Right lobe of liver (tissue), 6 donors: ENCODE measurements at regions of chr12 and their contacts with region 1.

Region 1: GRCh38 chr12:59808317-59808910 is 212.6 kb downstream of the SLC16A7 start:
- DNase-seq: no peak
- ATAC-seq: peak; percentile 76 to 84 (median 82)
- H3K4me3 ChIP-seq: no peak overlapping the region
- H3K27ac ChIP-seq: no peak overlapping the region
- H3K4me1 ChIP-seq: no peaks in the 10 kb centered on the region
- H3K27me3 ChIP-seq: no peaks in the 10 kb centered on the region
- CTCF ChIP-seq: peak; percentile 64 to 74 (median 73)
- POLR2A ChIP-seq: no peak

Region 2: DNA sequence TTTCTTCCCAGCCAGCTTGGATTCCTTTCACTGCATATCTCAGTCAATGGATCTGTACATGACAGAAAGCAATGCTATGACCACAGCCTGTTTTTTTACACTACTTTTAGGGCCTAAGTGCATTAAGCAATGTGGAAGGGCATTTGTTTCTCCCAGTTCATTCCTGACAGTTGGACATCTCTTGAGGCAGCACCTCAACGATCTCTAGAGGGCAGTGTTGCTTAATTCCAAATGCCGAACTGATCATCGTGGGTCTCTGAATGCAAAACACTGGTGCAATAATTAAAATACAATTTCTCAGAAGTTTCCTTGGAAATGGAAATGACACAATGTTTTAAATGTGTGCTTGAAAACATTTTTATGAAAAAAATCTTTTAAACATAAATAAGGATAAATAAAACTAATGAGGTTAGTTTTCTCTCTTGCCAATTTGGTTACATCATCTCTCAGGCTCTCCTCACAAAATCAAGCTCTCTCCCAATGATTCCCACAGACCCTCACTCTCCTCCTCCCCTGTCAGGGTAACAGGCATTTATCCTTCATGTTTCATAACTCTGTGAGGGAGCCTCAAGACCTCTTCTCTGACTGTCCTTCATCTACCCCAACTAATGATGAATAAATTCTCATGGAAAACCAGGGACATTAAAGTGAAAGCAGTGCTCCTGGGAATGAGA is 405.0 kb before region 1 on chr12:
- intact Hi-C with region 1: loop called in 1 of 2 experiments (anchors 10 kb)
- DNase-seq: peak in 1 of 3 donors; percentile 54
- ATAC-seq: peak; percentile 95 to 96 (median 96)
- H3K4me3 ChIP-seq: no peak overlapping the region
- H3K27ac ChIP-seq: no peak overlapping the region
- H3K4me1 ChIP-seq: peaks cover 0 to 8% (median 0%) of the 10 kb centered on the region in 4 donors
- H3K27me3 ChIP-seq: no peaks in the 10 kb centered on the region
- CTCF ChIP-seq: peak; percentile 52 to 78 (median 76)
- POLR2A ChIP-seq: no peak